ENCODE measurements at regions of chr20 and their contacts with region 1.

Region 1: DNA sequence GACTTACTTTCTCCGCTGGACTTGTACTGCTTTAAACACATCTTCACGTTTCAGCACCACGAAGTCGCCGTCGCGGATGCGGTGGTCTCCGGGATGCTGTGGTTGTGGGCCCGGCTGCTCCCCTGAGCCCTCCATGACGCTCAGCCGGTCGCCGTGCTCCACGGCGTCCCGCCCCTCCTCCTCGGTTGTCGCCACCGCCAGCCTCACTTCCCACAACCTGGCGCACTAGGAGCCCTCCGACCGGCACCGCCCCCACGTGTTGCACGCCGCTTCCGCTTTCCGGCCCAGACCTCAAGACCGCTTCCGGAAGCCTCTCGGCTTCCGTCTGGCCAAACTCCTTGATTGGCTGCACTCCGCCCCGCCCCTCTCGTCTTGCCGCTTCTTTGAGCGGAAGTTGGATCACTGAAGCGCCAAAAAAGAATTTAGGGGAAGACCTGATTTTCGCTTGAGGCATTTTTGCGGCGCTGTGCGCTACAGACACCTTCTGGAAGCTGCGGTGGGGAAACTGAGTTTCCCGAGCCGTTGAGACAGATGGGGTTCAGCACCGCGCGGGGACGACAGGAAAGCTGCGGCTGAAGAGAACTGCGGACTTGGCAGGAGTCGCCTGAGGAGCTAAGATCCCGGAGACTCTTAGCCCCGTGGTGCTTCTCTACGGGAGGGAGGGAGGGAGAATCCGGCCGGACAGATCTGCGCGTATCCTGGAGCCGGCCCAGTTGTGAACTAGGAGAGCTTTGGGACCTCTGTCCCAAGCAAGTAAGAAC is at the starts of genes MCM8 and TRMT6:
- DNase-seq: peak; percentile 96
- H3K4me3 ChIP-seq: peak within 1 kb of the TSS; percentile 62 to 86 (median 72)
- H3K27ac ChIP-seq: peak within 1 kb of the TSS; percentile 75
- H3K4me1 ChIP-seq: peaks cover 22% of the 10 kb centered on the region
- H3K27me3 ChIP-seq: no peaks in the 10 kb centered on the region
- CTCF ChIP-seq: no peak
- total RNA-seq, gene MCM8: 4.5 to 12.5 TPM
- total RNA-seq, gene TRMT6: 12.8 to 24.9 TPM

Region 2: GRCh38 chr20:5788385-5788895 is 162.0 kb before region 1 on chr20:
- CTCF ChIA-PET with region 1: no interaction called
- dilution Hi-C with region 1: no loop called
- in situ Hi-C with region 1: no loop called
- intact Hi-C with region 1: no loop called
- DNase-seq: peak; percentile 60
- H3K4me3 ChIP-seq: no peak overlapping the region
- H3K27ac ChIP-seq: no peak overlapping the region
- H3K4me1 ChIP-seq: no peaks in the 10 kb centered on the region
- H3K27me3 ChIP-seq: no peaks in the 10 kb centered on the region
- CTCF ChIP-seq: peak; percentile 80 to 91

Region 3: DNA sequence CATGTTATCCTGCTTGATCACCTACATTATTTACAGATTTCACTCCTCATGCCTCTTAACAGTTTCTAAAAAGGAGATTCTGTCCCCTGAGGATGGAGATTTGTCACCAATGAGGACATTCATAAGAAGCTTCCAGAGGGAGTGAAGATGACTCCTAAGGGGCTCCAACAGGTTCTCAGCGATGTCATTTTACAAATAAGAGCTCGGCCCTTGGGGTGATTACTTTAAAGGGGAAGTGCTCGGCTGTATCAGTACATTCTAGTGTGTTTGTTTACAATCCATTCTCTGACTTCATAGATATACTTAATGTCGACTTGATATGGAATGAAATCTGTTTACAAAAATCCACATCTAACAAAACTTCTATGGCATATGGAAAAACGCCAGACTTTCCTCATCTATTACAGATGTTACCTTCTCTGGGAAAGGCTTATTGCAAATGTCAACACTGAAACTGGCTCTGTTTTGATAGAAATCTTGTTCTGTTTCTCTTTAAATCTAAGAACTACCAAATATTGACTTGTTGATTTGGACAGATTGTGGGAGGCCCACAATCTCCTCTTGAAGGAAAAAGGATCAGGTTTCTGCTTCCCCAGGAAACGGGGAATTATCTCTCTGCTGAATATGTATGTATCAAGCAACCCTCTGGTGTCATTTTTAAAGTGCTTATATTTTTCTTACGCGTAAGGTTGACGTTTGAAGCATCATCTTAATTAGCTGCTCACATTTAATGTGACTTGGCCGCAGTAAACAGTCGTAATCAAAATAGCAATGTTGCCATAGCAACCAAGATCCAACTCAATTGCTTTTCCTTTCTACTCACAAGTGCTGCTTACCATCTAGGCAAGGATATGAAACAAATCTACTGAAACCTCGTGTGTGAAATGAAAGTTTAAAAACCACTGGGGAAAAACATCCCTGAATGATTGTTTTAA is 104.5 kb before region 1 on chr20:
- CTCF ChIA-PET with region 1: no interaction called
- dilution Hi-C with region 1: loop called (anchors 5 kb)
- in situ Hi-C with region 1: no loop called
- intact Hi-C with region 1: no loop called
- DNase-seq: no peak
- H3K4me3 ChIP-seq: no peak overlapping the region
- H3K27ac ChIP-seq: no peak overlapping the region
- H3K4me1 ChIP-seq: peaks cover 16% of the 10 kb centered on the region
- H3K27me3 ChIP-seq: no peaks in the 10 kb centered on the region
- CTCF ChIP-seq: no peak

Region 4: DNA sequence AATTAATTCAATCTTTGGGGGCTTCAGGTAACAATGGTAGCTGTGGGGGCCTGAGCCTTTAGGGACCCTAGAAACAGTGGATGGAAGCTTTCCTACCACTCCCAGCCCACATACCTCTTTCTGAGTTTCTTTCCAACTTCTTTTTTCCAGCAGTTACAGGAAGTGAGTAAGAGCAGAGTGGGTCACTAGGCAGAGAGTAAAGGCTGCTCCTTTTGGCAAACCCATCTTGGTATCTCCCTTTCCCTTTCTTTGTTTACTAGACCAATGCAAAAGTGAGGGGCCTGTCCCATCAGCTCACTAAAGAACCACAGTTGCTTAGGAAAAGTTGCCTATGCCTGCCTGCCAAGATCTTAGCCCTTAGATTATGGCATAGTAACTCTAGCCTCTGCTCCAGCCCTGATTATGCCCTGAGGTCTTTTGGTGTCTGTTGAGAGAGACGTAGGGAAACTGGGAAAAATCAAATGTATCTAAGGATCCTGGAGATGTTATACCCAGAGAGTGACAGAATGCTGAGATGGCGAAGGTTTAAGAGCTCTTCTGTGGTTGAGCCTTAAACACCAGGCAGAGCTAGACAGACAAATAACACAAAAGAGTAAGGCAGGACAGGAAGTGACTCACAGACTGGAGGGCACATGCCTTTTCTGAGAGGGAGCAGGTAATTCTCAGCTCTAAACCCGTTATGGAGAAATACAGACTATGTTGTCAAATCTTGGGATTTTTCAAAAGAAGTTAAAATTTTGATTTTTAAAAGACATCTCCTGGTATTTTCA is 31.4 kb before region 1 on chr20:
- CTCF ChIA-PET with region 1: no interaction called
- dilution Hi-C with region 1: no loop called
- in situ Hi-C with region 1: no loop called
- intact Hi-C with region 1: no loop called
- DNase-seq: peak; percentile 87
- H3K4me3 ChIP-seq: no peak overlapping the region
- H3K27ac ChIP-seq: peak overlapping the region; percentile 88
- H3K4me1 ChIP-seq: peaks cover 21% of the 10 kb centered on the region
- H3K27me3 ChIP-seq: no peaks in the 10 kb centered on the region
- CTCF ChIP-seq: no peak

Region 5: DNA sequence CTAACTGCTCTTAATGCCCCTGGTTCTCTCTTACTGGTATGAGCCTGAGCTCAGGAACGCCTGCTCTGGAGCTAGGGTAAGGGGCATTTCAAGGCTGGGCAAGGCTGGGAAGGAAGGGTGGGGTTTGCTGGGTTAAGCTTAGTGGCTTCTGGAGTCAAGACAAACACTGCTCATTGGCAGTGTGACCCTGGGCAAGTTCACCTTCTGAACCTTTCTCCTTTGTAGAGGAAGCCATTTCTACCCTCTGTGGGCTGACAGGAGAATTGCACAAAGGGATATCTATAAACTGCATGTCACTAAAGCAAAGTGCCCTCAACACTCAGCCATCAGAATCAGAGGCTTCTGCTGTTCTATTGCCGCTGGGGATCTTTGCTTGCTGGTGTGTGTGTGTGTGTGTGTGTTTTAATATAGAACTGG is 123.7 kb after region 1 on chr20:
- CTCF ChIA-PET with region 1: no interaction called
- dilution Hi-C with region 1: no loop called
- in situ Hi-C with region 1: no loop called
- intact Hi-C with region 1: loop called (anchors 5 kb)
- DNase-seq: no peak
- H3K4me3 ChIP-seq: no peak overlapping the region
- H3K27ac ChIP-seq: no peak overlapping the region
- H3K4me1 ChIP-seq: no peaks in the 10 kb centered on the region
- H3K27me3 ChIP-seq: no peaks in the 10 kb centered on the region
- CTCF ChIP-seq: peak; percentile 13 to 30

Measured in mammary epithelial cell (primary cell).